PC-3 (cell line): ENCODE measurements at regions of chr3 and their contacts with region 1.

Region 1: GRCh38 chr3:48273594-48274211 is 32.8 kb downstream of the ZNF589 start:
- DNase-seq: peak; percentile 83
- ATAC-seq: peak; percentile 53
- H3K4me3 ChIP-seq: no peak overlapping the region
- H3K27ac ChIP-seq: no peak overlapping the region
- H3K4me1 ChIP-seq: peaks cover 21% of the 10 kb centered on the region
- H3K27me3 ChIP-seq: no peaks in the 10 kb centered on the region
- CTCF ChIP-seq: peak; percentile 88

Region 2: DNA sequence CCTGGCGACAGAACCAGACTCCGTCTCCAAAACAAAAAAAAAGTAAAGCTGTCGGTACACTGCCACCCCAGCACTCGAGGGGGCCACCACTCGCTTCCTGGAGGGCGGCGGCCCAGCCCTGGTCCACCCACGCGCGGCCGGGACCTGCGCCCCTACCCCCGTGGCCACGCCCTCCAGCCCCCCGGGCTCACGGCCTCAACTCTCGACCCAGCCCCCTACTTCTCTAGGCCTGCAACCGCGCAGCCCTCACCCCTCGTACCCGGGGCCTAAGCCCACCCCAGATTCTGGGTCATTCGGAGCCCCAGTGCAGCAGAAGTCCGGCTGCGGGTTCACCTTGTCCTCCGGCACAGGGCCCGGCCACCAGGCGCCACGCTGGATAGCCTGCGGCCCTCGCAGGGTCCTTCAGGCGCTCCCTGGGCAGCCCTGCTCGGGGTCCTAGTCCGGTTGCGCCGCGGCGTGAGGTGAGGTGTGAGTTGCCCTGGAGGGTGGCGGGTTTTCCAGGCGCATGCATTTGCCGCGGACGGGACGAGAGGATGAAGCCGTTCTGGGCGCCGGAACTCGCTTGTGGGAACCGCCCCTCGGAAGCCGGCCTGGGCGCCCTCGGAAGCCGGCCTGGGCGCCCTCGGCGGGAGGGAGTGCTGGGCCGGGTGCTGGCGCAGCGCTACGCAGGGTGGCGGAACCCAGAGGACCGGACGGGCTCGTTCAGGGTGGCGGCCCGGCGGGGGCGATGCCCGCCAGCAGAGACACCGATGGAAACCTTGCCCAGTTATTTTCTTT is 27.5 kb after region 1 on chr3:
- CTCF ChIA-PET with region 1: no interaction called
- POLR2A ChIA-PET with region 1: no interaction called
- intact Hi-C with region 1: no loop called
- DNase-seq: peak; percentile 93
- ATAC-seq: peak; percentile 94
- H3K4me3 ChIP-seq: peak within 1 kb of the TSS; percentile 97
- H3K27ac ChIP-seq: peak within 1 kb of the TSS; percentile 81
- H3K4me1 ChIP-seq: peaks cover 17% of the 10 kb centered on the region
- H3K27me3 ChIP-seq: no peaks in the 10 kb centered on the region
- CTCF ChIP-seq: no peak

Region 3: GRCh38 chr3:48400824-48401433 is 127.2 kb after region 1 on chr3:
- CTCF ChIA-PET with region 1: interaction called, 15 read pairs
- POLR2A ChIA-PET with region 1: no interaction called
- intact Hi-C with region 1: loop called (anchors 1 kb)
- DNase-seq: peak; percentile 86
- ATAC-seq: peak; percentile 66
- H3K4me3 ChIP-seq: no peak overlapping the region
- H3K27ac ChIP-seq: no peak overlapping the region
- H3K4me1 ChIP-seq: peaks cover 11% of the 10 kb centered on the region; the same call in 1 of the 2 replicates
- H3K27me3 ChIP-seq: no peaks in the 10 kb centered on the region
- CTCF ChIP-seq: peak; percentile 82

Region 4: DNA sequence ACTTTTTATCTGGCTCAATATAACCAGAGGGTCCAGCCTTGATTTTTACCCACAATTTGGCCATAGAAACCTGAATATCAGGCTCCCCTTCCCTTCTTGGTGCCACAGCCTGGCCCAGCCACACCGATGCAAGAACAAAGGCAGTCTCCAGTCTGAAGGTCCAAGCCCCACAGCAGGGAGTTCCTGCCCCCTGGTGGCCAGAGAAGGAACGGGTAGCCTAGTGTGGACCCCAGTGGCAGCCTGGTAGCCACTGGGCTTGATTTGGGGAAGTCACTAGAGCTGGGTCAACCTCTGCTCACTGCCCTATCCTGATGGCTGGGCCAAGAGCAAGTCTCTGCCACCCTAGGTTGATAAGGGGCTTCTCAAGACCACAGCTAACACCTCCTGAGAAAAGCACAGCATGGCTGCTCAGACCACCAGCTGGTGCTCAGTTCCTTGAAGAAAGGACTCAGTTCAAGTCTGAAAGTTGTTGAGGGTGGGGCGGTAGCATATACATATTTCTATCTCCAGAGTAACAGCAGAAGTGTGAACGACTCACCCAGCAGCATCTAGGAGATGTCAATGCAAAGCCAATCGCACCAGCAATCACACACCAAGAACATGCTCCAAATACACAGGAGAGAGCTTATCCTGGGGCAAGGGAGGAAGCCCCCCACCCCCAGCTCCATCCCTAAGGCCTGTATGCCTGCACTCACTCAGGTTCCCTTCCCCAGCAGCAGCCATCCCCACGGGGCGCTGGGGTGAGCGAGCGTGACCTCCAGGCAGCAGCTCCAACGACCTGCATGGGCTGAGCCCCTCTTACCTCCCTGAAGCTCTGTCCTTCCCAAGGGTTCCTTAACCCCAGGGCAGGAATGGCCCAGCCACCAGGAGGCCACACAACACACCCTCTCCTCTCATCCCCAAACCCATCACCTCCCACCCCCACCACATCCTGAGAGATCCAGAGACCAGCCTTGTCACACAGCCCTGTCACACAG is 275.3 kb after region 1 on chr3:
- CTCF ChIA-PET with region 1: no interaction called
- POLR2A ChIA-PET with region 1: no interaction called
- intact Hi-C with region 1: loop called (anchors 1 kb)
- DNase-seq: peak; percentile 90
- ATAC-seq: peak; percentile 99
- H3K4me3 ChIP-seq: no peak overlapping the region
- H3K27ac ChIP-seq: no peak overlapping the region
- H3K4me1 ChIP-seq: no peaks in the 10 kb centered on the region
- H3K27me3 ChIP-seq: no peaks in the 10 kb centered on the region
- CTCF ChIP-seq: peak; percentile 97